WTC11 (cell line): ENCODE measurements at regions of chr4 and their contacts with region 1.

Region 1: DNA sequence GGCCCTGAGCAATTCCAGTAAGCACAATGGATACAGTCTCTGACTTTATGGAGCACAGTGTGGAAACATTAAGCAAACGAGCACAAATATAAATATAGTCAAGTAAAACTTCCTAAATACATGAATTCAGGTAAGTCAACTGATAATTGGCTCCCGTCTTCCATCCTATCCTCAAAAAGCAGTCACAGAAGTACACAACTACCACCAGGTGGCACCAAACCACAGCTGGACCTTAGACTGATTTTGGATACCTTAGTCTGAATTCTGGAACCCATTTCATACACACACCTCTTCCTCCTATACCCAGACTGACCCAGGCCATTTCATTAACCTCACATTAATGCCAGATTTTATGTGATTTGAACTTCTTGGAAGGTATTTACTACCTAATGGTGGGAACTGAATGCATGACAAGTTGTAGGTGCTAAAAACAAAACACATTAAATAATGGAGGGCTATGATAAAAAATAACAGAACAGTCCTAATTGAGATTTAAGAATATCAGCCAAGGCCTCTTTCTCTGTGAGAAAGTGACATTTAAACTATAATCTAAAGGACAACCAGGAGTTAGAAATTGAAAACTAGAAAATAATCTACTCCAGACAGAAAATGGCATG is 77.5 kb downstream of the ELF2 start:
- DNase-seq: peak; percentile 74
- ATAC-seq: peak; percentile 73
- H3K4me3 Mint-ChIP-seq: no peak overlapping the region
- H3K27ac Mint-ChIP-seq: no peak overlapping the region
- H3K4me1 Mint-ChIP-seq: peaks cover 30% of the 10 kb centered on the region
- H3K27me3 Mint-ChIP-seq: no peaks in the 10 kb centered on the region
- CTCF ChIP-seq: peak; percentile 74

Region 2: GRCh38 chr4:138967313-138967712 is 132.2 kb before region 1 on chr4:
- CTCF ChIA-PET with region 1: no interaction called
- POLR2A ChIA-PET with region 1: interaction called, 11 read pairs
- DNase-seq: no peak
- ATAC-seq: no peak
- H3K4me3 Mint-ChIP-seq: no peak overlapping the region
- H3K27ac Mint-ChIP-seq: no peak overlapping the region
- H3K4me1 Mint-ChIP-seq: peaks cover 14% of the 10 kb centered on the region
- H3K27me3 Mint-ChIP-seq: no peaks in the 10 kb centered on the region
- CTCF ChIP-seq: no peak

Region 3: GRCh38 chr4:139167774-139168444 is 68.4 kb after region 1 on chr4:
- CTCF ChIA-PET with region 1: interaction called, 12 read pairs
- POLR2A ChIA-PET with region 1: no interaction called
- DNase-seq: no peak
- ATAC-seq: peak; percentile 56
- H3K4me3 Mint-ChIP-seq: no peak overlapping the region
- H3K27ac Mint-ChIP-seq: peak overlapping the region; percentile 96
- H3K4me1 Mint-ChIP-seq: peaks cover 75% of the 10 kb centered on the region
- H3K27me3 Mint-ChIP-seq: no peaks in the 10 kb centered on the region
- CTCF ChIP-seq: no peak

Region 4: DNA sequence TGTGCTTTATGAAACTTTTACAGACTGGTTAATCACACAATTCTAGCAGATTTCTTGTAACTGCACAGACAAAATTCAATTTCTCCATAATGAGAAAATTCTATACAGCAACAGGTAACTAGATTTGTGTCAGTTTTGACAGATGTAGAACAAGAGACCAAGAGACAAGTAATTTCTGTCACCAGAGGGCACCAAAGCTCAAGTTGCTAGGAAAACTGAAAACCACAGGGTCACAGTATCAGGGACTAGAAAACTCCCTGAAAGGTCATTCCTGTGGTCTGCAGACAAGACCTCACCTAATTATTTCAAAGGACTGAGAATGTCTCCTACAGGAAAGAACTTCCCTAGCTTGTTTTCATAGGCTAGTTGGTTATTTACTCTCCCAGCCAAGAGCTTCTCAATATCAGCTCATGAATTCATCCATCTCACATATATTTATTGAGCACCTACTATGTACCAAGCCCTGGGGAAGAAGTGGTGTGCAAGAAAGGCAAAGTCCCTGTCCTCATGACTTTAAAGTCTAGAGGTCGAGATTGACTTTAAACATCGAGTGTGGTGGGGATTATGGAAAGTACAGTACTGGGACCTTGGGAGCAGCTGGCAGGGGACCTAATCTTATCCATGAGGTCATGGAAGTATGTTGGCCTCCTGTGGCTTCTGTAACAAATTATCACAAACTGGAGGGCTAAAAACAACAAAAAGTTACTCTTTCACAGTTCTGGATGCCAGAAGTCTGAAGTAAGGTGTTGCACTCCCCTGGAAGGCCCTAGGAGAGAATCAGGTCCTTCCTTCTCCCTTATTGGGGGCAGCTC is 504.3 kb after region 1 on chr4:
- CTCF ChIA-PET with region 1: no interaction called
- POLR2A ChIA-PET with region 1: no interaction called
- DNase-seq: peak; percentile 20
- ATAC-seq: peak; percentile 80
- H3K4me3 Mint-ChIP-seq: no peak overlapping the region
- H3K27ac Mint-ChIP-seq: no peak overlapping the region
- H3K4me1 Mint-ChIP-seq: 0 out of 2 replicates have a peak, but pooled peaks cover 11% of the 10 kb centered on the region
- H3K27me3 Mint-ChIP-seq: peaks cover 18% of the 10 kb centered on the region
- CTCF ChIP-seq: no peak